Activated CD4-positive, alpha-beta T cell treated with anti-CD3 and anti-CD28 coated beads, Interleukin-2, amount 10 ng/mL, durations not matched to agents 24 days and 14 days (primary cell): ENCODE measurements at regions of chr17 and their contacts with region 1.

Region 1: GRCh38 chr17:82022981-82023374 is at the start of gene LRRC45:
- DNase-seq: peak; percentile 100
- H3K4me3 Mint-ChIP-seq: peak within 1 kb of the TSS; percentile 88
- H3K27ac Mint-ChIP-seq: peak within 1 kb of the TSS; percentile 76
- H3K4me1 Mint-ChIP-seq: peaks cover 23% of the 10 kb centered on the region
- H3K27me3 Mint-ChIP-seq: no peaks in the 10 kb centered on the region
- total RNA-seq, gene LRRC45: 39.0 and 40.6 TPM in 2 replicates

Region 2: DNA sequence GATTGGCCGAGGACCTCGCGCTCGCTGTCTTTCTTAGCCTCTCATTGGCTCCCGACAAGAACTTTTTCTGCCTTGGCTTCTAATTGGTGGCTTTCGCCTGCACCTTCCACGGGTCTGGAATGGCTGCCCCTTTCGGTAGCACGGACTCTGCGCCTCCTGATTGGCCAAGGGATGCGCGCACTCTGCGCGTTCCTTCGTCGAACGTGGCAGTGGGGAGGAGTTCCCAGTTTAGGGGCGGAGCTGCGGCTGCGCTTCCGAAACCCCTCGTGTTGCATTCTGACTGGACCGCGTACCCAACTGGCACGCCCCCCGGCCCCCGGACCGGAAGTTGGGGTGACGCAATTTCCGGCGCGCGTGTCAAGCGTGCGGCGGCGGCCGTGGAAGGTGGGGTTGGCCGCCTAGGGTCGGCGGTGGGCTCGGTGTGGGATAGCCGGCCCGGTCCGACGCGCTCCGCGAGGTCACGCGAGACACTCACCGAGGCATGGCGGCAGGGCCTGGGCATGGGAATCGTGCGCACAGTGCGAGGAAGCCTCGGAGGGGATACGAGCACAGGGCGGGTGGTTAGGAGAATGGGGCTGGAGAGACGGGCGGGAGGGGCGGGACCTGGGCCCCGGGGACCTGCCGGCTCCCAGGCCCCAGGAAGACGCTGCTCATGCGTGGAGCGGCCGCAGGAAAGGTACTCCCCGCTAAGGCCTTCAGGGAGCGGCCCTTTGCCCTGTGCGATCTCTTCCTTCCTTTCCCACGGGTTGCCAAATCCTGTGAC is 162.0 kb before region 1 on chr17:
- intact Hi-C with region 1: loop called (anchors 5 kb)
- DNase-seq: peak; percentile 100
- H3K4me3 Mint-ChIP-seq: peak overlapping the region; percentile 96
- H3K27ac Mint-ChIP-seq: peak overlapping the region; percentile 98
- H3K4me1 Mint-ChIP-seq: peaks cover 44% of the 10 kb centered on the region
- H3K27me3 Mint-ChIP-seq: no peaks in the 10 kb centered on the region

Region 3: DNA sequence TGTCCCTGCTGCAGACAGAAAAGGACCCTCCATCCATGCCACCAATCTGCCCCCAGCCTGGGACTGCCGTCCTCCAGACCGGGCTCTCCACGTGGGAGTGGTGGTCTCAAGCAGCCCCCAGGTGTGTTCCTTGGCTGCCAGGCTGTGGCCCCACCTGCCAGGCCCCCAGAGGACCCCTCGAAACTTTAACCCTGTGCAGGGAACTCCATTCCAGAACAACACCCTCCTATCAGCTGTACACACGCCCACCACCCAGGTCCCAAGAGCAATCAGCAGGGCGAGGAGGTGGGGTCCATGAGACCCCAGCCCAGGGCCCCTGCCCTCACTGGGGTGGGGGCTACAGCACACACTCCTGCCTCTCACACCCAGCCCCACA is 87.3 kb before region 1 on chr17:
- intact Hi-C with region 1: loop called (anchors 2 kb)
- DNase-seq: no peak
- H3K4me3 Mint-ChIP-seq: peak overlapping the region; percentile 90
- H3K27ac Mint-ChIP-seq: peak overlapping the region; percentile 40
- H3K4me1 Mint-ChIP-seq: peaks cover 18% of the 10 kb centered on the region
- H3K27me3 Mint-ChIP-seq: peaks cover 2% of the 10 kb centered on the region

Region 4: GRCh38 chr17:81977211-81978027 is 45.6 kb before region 1 on chr17 and contains the start of gene ASPSCR1:
- intact Hi-C with region 1: loop called (anchors 1 kb)
- DNase-seq: peak; percentile 97
- H3K4me3 Mint-ChIP-seq: peak within 1 kb of the TSS; percentile 92
- H3K27ac Mint-ChIP-seq: peak within 1 kb of the TSS; percentile 98
- H3K4me1 Mint-ChIP-seq: peaks cover 33% of the 10 kb centered on the region
- H3K27me3 Mint-ChIP-seq: peaks cover 2% of the 10 kb centered on the region
- total RNA-seq, gene ASPSCR1: 35.1 and 37.3 TPM in 2 replicates

Region 5: GRCh38 chr17:82098072-82098821 is 75.3 kb after region 1 on chr17 and contains the start of gene FASN:
- intact Hi-C with region 1: loop called (anchors 2 kb)
- DNase-seq: peak; percentile 97
- H3K4me3 Mint-ChIP-seq: peak within 1 kb of the TSS; percentile 80
- H3K27ac Mint-ChIP-seq: peak within 1 kb of the TSS; percentile 74
- H3K4me1 Mint-ChIP-seq: peaks cover 12% of the 10 kb centered on the region
- H3K27me3 Mint-ChIP-seq: no peaks in the 10 kb centered on the region
- total RNA-seq, gene FASN: 428 and 452 TPM in 2 replicates

Region 6: DNA sequence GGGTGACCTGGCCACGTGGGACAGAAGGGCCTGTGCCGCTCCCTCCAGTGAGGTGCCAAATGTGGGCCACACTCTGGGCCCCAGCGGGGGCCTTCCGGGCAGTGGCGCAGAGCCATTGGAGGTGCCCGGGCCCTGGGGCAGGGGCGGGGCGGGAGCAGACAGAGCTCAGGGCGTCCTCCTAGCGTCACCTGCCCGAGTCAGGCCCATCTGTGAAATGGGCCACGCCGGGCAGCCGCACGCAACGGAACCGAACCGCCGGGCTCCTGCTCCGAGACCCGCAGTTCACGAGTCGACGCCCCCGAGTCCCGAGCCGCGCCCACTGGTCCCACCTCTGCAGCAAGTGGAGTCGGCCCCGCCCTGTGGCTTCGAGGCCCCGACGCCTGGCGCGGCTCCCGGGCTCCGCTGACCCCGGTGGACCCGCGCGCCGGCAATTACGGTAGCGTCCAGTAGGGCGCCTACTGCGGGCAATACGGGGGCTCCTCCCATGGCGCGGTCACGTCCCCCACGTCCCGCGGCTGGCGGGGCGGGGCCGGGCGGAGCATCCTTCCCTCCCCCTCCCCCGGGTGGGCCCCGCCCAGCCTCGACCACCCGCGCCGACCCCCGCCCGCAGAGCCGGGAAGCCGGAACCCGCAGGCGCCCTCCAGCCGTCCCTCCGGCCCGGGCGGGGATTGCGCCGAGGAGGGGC is 207.8 kb after region 1 on chr17:
- intact Hi-C with region 1: loop called (anchors 5 kb)
- DNase-seq: peak; percentile 92
- H3K4me3 Mint-ChIP-seq: peak overlapping the region; percentile 96
- H3K27ac Mint-ChIP-seq: no peak overlapping the region
- H3K4me1 Mint-ChIP-seq: peaks cover 8% of the 10 kb centered on the region
- H3K27me3 Mint-ChIP-seq: no peaks in the 10 kb centered on the region

Region 7: DNA sequence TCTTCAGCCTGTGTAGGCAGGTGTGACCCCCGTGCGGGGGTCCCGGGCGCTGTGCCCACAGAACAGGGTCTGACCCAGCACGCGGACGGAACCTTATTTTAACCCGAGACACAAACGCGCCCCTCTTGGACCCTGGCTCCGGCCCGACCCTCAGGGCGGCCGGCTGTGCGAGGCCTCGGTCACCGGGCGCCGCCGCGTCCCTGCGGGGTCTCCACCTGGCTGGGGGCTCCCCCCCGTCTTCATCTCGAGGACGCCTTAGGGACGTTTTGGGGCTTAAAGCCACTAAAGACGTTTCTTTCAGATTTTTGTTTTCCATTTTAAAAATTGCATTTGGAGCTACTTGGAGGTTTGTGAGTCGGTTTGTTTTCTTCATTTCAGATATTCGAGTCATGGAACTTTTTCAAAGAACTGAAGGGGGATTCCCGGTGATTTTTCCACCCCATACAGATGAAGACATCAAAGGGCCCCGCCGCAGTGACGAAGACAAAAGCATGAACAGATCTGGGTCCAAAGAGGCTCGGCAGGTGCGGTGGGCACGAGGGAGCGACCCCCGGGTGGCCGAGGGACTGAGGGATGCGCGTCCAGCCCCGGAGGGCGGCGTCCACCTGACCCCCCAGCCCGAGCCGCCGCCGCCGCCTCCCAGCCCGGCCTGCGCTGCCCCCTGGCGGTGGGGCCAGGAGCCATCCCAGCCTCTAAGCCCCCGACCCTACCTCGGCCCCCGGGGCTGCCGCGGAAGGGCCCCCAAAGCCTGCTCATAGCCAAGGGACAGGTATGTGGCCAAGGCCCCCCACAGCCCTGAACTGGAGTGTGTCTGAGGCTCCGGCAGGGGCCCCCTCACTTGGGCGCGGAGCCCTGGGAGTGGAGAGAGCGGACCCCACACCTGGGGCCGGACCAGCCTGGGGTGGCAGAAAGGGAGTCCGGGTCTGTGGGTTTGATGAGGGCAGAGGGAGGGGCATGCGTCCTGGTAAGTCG is 298.3 kb after region 1 on chr17:
- intact Hi-C with region 1: no loop called
- DNase-seq: peak; percentile 93
- H3K4me3 Mint-ChIP-seq: peak overlapping the region; percentile 83
- H3K27ac Mint-ChIP-seq: peak overlapping the region; percentile 94
- H3K4me1 Mint-ChIP-seq: peaks cover 31% of the 10 kb centered on the region
- H3K27me3 Mint-ChIP-seq: no peaks in the 10 kb centered on the region

Region 8: GRCh38 chr17:82358465-82359350 is 335.7 kb after region 1 on chr17 and contains the start of gene TEX19:
- intact Hi-C with region 1: no loop called
- DNase-seq: peak; percentile 67
- H3K4me3 Mint-ChIP-seq: peak within 1 kb of the TSS; percentile 20
- H3K27ac Mint-ChIP-seq: peak within 1 kb of the TSS; percentile 69
- H3K4me1 Mint-ChIP-seq: peaks cover 7% of the 10 kb centered on the region
- H3K27me3 Mint-ChIP-seq: peaks cover 19% of the 10 kb centered on the region
- total RNA-seq, gene TEX19: 0.09 TPM in 2 replicates